Posterior cingulate gyrus (tissue), 11 donors: ENCODE measurements at regions of chr22 and their contacts with region 1.

Region 1: GRCh38 chr22:40651563-40652501 is 15.3 kb upstream of the MRTFA start:
- DNase-seq: peak; percentile 92 to 99 (median 97)

Region 2: DNA sequence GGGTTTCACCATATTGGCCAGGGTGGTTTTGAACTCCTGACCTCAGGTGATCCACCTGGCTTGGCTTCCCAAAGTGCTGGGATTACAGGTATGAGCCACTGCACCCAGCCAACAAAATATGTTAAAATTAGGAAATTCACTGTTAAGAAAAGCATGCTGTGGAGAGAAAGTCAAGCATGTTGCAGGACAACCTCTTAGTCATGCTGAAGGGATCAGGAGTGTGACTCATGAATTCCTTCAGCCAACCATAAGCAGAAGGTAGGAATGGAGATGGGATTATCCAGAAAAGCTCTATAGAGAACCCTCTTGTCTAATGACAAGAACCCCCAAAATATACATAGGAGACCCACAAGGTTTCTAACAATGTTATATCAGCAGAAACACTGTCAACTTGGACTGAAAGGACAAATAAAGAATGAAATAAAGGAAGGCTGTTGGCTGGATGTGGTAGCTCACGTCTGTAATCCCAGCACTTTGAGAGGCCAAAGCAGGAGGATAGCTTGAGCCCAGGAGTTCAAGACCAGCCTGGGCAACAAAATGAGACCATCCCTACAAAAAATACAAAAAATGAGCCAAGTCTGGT is 31.3 kb before region 1 on chr22:
- intact Hi-C with region 1: no loop called
- DNase-seq: no peak

Region 3: DNA sequence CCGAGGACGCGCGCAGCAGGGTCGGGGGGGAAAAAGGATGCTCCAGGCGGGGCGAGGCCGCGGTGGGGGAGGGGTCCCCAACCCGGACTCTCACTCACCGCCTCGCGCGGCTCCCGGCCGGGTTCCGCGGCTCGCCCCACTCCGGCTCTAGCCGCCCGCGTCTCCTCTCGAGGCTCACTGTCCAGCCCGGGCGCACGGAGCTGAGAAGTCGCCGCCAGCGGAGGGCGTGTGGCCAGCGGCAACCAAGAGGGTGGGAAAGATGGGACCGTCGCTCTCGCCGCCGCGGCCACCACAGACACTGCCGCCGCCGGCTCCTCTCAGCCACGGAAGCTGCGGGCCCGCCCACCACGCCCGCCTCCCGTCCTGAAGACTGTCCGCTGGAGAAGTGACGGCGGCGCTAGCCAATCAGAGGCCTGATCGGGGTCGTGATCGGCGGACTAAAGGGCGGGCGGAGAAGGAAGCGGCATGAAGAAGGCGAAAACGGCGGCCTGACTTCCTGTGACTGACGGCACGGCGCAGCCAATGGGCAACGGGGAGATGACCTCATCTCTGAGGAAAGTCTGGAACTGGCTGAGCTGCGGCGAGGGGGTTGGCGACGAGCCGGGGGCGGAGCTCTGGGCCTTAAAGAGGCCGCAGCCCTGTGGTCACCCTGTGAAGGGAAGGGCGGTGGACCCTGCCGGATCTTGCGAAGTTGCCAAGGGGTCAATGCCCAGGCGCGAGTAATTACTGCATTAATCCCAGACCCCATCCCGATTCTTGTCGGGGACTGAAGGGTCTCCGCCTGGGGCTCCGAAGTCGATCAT is 15.3 kb before region 1 on chr22 and contains the start of gene MRTFA:
- intact Hi-C with region 1: loop called (anchors 2 kb)
- DNase-seq: peak; percentile 100

Region 4: GRCh38 chr22:40728731-40729189 is 76.9 kb after region 1 on chr22:
- intact Hi-C with region 1: no loop called
- DNase-seq: peak in 1 of 10 donors; percentile 22

Region 5: DNA sequence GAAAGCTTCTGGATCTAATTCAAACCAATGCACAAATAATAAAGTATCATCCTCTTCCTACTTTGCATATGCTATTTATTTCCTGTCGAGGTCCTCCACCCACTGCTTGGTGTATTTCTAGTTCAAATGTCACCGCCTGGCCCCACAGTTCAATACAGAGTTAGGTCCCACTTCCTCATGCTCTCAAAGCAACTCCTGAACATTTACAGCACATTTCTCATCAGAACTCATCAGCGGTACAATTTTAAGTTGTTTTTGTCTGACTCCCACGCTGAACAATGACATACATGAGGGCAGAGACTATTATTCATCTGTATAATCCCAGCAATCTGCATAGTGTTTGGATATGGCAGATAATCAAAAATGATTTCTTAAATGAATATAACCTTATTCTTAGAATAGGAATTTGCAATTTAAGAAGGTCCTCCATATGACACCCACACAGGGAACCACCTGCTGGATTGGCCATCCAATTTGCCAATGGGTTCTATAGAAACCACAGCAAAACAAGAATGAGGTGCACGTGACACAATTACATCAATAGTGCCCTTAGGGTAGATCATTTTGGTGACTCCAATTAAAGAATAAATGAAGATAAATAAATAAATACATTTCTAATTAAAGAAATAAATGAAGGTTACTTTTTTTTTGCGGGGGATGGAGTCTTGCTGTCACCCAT is 113.1 kb after region 1 on chr22:
- intact Hi-C with region 1: loop called (anchors 1 kb)
- DNase-seq: no peak

Region 6: DNA sequence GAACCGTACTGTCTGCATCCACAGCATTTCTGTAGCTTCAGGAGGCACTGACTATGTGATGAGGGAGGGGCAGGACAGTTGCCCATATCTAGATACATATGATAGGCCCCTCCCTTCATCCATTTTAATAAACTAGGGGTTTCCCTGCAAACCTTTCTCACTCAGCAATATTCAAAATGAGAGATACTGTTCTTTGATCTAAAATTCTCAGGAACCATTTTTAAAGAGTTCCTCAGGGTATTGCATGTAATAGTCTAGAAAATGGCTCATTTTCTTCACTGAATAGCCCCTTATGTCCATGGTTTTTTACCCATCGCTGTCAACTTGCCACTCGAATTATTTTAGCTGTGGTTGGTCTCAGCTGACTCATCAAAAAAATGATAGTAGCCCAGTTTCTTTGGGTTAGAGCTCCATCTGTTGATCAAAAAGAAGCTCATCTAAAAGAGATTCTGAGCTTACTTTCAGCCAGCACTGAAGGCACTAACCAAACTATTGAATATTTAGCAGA is 247.1 kb after region 1 on chr22:
- intact Hi-C with region 1: loop called (anchors 10 kb)
- DNase-seq: no peak

Region 7: DNA sequence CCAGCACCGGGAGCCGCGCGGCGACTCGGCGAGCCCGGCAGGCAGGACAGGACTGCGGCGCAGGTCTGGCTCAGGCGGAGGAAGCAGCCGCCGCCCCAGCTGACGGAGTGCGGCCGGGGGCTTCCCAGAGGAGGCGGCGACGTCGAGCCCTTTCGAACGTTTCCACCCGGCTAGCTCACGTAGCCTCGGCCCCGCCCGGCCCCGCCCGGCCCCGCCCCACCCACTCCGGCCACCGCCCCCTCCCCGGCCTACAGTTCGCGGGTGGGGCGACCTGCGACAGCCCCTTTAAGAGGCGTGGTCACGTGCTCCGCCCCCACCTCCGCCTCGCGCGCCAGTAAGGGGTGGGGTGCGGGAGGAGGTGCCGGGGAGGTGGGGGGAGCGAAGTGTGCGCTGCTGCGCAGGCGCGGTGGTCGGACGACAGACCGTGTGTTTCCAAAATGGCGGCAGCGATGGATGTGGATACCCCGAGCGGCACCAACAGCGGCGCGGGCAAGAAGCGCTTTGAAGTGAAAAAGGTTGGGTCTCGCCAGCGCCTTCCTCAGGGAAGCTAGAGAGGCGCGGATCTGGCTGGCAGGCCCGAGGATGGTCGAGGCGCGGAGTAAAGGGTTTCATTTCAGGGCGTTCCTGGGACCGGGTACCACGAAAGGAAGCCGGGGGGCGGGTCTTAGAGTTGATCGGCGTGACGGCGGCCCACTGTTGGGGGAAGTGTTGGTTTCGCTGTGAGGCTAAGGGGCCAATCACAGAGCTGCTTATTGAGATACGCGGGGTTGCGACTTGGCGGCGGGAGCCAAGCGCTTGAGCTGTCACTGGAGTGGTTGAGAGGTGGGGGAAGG is 299.3 kb after region 1 on chr22 and contains the start of gene RBX1:
- intact Hi-C with region 1: no loop called
- DNase-seq: peak; percentile 96 to 100 (median 98)